Activated CD4-positive, alpha-beta T cell treated with anti-CD3 and anti-CD28 coated beads for 36 hours (primary cell): ENCODE measurements at regions of chr3 and their contacts with region 1.

Region 1: DNA sequence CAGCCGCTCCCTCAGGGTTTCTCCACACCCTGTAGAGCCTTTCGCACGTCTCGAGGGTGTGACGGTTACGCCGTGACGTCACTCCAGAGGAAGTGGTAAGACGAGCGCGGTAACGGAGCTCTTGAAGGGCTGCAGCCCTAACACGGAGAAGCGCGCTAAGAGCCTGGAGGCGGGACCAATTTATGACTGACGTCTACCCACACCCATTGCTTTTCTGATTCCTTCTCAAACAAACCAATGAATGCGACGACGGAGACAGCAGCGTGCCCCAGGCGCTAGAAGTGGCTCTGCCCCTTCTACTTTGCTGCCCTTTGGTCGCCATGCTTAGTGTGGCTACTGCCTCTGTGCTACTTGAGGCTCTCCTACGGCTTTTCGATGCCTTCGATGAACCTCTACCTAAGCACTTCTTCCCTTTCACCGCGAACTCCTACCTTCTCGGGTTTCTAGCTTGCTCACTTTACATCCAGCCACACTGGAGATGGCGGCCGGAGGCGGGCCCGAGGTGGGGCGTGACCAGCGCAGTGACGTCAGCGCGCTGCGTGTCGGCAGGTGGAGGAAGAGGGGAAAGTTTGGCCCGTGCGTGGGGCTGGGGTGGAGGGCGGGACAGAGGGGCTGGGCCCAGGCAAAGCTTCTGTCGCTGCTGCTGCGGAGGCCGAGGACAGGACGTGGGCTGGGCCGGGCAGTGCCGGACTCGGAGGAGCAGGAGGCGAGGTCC is at the start of gene OXSR1:
- DNase-seq: peak; percentile 98
- ATAC-seq: peak; percentile 94
- H3K4me3 Mint-ChIP-seq: peak within 1 kb of the TSS; percentile 92
- H3K27ac Mint-ChIP-seq: peak within 1 kb of the TSS; percentile 99
- H3K4me1 Mint-ChIP-seq: peaks cover 40% of the 10 kb centered on the region
- H3K27me3 Mint-ChIP-seq: no peaks in the 10 kb centered on the region
- total RNA-seq, gene OXSR1: 53.7 to 56.0 TPM

Region 2: DNA sequence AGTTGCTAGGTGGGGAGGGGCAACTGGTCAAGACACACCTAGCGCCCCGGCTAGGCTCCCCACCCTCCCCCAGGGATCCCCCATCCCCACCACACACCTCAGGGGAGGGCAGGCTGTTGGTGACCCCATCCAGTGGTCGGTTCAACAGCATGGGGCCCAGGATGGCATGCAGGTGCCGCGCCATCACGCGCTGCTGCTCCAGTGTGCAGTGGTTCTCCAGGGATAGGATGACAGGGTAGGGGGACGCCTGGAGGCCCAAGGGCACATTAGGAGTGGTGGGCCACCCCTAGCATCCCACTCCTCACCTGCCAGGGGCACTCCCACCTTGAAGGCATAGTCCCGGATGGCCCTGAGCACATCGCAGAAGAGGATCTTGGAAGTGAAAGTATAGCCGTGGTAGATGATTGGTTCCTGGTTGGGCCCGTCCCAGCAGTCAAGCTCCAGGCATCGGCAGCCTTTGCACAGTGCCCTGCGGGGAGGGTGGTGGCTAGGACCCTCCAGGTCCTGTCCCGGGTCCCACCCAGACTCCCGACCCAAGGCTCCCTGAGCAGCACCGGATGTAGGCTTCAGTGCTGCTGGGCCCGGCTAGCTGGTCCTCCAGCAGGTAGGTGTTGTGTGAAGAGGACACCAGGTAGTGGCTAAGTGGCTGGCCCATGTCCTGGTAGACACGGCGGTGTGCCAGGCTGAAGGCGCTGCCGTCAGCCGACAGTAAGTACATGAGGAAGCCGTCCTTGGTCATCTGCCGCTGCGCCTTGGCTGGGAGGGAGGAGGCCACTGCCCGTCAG is 155.1 kb before region 1 on chr3:
- CTCF ChIA-PET with region 1: no interaction called
- POLR2A ChIA-PET with region 1: no interaction called
- intact Hi-C with region 1: no loop called
- DNase-seq: no peak
- ATAC-seq: no peak
- H3K4me3 Mint-ChIP-seq: no peak overlapping the region
- H3K27ac Mint-ChIP-seq: no peak overlapping the region
- H3K4me1 Mint-ChIP-seq: no peaks in the 10 kb centered on the region
- H3K27me3 Mint-ChIP-seq: no peaks in the 10 kb centered on the region

Region 3: DNA sequence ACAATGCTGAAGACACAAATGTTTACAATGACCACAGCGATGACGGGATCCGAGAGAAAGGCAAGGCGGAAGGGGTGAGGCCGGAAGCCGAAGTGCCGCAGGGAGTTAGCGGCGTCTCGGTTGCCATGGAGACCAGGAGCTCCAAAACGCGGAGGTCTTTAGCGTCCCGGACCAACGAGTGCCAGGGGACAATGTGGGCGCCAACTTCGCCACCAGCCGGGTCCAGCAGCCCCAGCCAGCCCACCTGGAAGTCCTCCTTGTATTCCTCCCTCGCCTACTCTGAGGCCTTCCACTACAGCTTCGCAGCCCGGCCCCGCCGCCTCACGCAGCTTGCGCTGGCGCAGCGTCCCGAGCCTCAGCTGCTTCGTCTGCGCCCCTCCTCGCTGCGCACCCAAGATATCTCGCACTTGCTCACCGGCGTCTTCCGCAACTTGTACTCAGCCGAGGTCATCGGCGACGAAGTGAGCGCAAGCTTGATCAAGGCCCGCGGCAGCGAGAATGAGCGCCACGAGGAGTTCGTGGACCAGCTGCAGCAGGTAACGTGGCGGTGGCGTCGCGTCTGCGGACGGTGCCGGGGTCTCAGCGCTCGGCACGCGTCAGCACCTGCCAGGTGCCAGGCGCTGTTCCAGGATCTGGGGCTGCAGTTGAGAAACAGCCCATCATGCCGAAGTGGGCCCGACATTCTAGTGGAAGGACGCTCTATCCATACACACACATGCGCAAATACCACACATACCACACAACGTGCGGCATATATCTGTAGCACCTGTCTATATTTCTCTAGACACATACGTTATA is 125.8 kb before region 1 on chr3 and contains the start of gene DLEC1:
- CTCF ChIA-PET with region 1: no interaction called
- POLR2A ChIA-PET with region 1: no interaction called
- intact Hi-C with region 1: loop called (anchors 1 to 10 kb)
- DNase-seq: peak; percentile 91
- ATAC-seq: peak; percentile 70
- H3K4me3 Mint-ChIP-seq: peak within 1 kb of the TSS; percentile 29
- H3K27ac Mint-ChIP-seq: peak within 1 kb of the TSS; percentile 91
- H3K4me1 Mint-ChIP-seq: peaks cover 27% of the 10 kb centered on the region
- H3K27me3 Mint-ChIP-seq: peaks cover 2% of the 10 kb centered on the region
- total RNA-seq, gene DLEC1: 0.19 to 0.46 TPM

Region 4: GRCh38 chr3:38346587-38347410 is 181.7 kb after region 1 on chr3 and contains the start of gene XYLB:
- CTCF ChIA-PET with region 1: interaction called, 3 read pairs
- POLR2A ChIA-PET with region 1: interaction called, 3 read pairs
- intact Hi-C with region 1: loop called in 1 of 2 experiments (anchors 1 kb)
- DNase-seq: peak; percentile 89
- ATAC-seq: peak; percentile 98
- H3K4me3 Mint-ChIP-seq: peak within 1 kb of the TSS; percentile 70
- H3K27ac Mint-ChIP-seq: no peak within 1 kb of the TSS
- H3K4me1 Mint-ChIP-seq: peaks cover 2% of the 10 kb centered on the region
- H3K27me3 Mint-ChIP-seq: peaks cover 2% of the 10 kb centered on the region
- total RNA-seq, gene XYLB: 5.0 to 5.3 TPM

Region 5: DNA sequence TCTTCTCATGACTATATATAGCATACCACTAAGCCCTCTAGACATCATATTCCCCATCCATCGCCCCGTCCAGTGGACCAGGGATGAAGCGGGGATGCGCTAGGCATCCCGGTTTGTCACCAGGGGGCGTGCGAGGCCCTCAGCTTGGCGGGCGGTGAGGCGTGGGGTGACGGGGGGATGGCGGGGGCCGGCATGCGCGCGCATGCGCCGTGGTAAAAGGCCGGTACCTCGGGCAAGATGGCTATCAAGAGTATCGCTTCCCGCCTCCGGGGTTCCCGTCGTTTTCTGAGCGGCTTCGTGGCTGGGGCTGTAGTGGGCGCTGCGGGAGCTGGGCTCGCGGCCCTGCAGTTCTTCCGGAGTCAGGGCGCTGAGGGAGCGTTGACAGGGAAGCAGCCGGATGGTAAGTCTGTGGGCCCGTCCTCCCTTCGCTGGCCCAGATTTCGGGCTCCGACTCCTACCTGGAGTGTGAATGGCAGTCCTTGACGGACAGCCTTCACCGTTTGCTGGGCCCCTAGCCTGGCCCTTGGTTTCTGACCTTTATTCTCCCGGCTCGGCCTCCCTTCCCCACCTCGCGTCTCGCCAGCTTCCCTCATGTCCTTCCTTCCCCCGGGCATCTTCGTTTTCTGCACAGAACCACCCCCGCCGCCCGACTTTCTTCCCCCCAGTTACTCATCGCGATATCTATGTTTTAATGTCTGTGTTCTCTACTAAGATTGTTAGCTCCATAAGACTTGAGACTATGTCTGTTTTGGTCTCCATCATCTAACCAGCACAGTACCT is 331.2 kb after region 1 on chr3 and contains the start of gene EXOG:
- CTCF ChIA-PET with region 1: no interaction called
- POLR2A ChIA-PET with region 1: interaction called, 6 read pairs
- intact Hi-C with region 1: loop called in 1 of 2 experiments (anchors 2 kb)
- DNase-seq: peak; percentile 98
- ATAC-seq: peak; percentile 88
- H3K4me3 Mint-ChIP-seq: peak within 1 kb of the TSS; percentile 86
- H3K27ac Mint-ChIP-seq: peak within 1 kb of the TSS; percentile 92
- H3K4me1 Mint-ChIP-seq: peaks cover 18% of the 10 kb centered on the region
- H3K27me3 Mint-ChIP-seq: no peaks in the 10 kb centered on the region
- total RNA-seq, gene EXOG: 13.0 to 14.9 TPM

Region 6: DNA sequence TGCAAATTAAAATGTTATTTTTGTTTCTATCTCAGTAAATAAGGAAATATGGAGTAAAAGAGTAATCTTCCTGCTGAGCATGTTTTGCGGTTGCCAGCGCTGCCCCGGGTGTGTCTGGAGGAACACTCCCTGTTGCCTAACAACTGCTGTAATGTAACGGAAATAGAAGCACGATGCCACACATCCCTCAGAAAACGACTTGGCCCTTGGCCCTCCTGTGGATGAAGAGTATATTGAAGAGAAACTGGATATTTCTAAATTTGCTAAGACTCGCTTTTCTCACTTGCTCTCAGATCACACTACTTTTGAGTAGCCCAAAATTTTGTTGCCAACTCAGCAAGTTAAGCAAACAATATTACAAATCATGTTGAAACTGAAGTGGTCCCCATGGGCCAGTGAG is 1095.8 kb after region 1 on chr3:
- CTCF ChIA-PET with region 1: no interaction called
- POLR2A ChIA-PET with region 1: no interaction called
- intact Hi-C with region 1: loop called in 1 of 2 experiments (anchors 10 kb)
- DNase-seq: peak; percentile 76
- ATAC-seq: peak; percentile 85
- H3K4me3 Mint-ChIP-seq: no peak overlapping the region
- H3K27ac Mint-ChIP-seq: no peak overlapping the region
- H3K4me1 Mint-ChIP-seq: peaks cover 33% of the 10 kb centered on the region
- H3K27me3 Mint-ChIP-seq: peaks cover 3% of the 10 kb centered on the region